ENCODE measurements at regions of chrX and their contacts with region 1.

Region 1: DNA sequence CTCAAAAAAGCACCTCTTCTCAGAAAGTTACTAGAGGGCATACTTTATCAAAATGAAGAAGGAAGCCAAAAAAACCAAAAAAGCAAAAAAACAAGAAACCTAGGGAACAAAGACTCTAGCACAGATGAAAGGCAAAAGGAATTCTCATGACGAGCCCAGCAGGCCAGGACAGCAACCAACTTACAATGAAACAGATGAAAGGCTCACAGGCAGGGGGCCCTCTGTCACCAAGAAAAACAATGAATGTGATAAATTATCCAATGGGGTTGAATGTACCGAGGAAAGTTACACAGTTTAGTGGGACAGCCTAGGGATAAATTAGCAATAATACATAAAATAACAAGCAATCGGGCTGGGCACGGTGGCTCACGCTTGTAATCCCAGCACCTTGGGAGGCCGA is 79.0 kb downstream of the GPR82 start:
- DNase-seq: no peak
- ATAC-seq: no peak
- H3K4me3 ChIP-seq: no peak overlapping the region
- H3K27ac ChIP-seq: no peak overlapping the region
- H3K4me1 ChIP-seq: no peaks in the 10 kb centered on the region
- H3K27me3 ChIP-seq: no peaks in the 10 kb centered on the region
- CTCF ChIP-seq: no peak
- EP300 ChIP-seq: no peak
- POLR2A ChIP-seq: no peak
- RAD21 ChIP-seq: no peak

Region 2: GRCh38 chrX:41917517-41917916 is 114.6 kb after region 1 on chrX:
- CTCF ChIA-PET with region 1: interaction called, 14 read pairs
- POLR2A ChIA-PET with region 1: interaction called, 3 read pairs
- RAD21 ChIA-PET with region 1: interaction called, 76 read pairs
- SMC1A ChIA-PET with region 1: interaction called, 38 read pairs
- in situ Hi-C with region 1: no loop called
- intact Hi-C with region 1: loop called (anchors 1 kb)
- DNase-seq: no peak
- ATAC-seq: no peak
- H3K4me3 ChIP-seq: no peak overlapping the region
- H3K27ac ChIP-seq: no peak overlapping the region
- H3K4me1 ChIP-seq: no peaks in the 10 kb centered on the region
- H3K27me3 ChIP-seq: no peaks in the 10 kb centered on the region
- CTCF ChIP-seq: no peak
- EP300 ChIP-seq: no peak
- POLR2A ChIP-seq: no peak
- RAD21 ChIP-seq: no peak

Measured in GM12878 (cell line).